Posterior vena cava (tissue), 2 donors: ENCODE measurements at regions of chr12 and their contacts with region 1.

Region 1: DNA sequence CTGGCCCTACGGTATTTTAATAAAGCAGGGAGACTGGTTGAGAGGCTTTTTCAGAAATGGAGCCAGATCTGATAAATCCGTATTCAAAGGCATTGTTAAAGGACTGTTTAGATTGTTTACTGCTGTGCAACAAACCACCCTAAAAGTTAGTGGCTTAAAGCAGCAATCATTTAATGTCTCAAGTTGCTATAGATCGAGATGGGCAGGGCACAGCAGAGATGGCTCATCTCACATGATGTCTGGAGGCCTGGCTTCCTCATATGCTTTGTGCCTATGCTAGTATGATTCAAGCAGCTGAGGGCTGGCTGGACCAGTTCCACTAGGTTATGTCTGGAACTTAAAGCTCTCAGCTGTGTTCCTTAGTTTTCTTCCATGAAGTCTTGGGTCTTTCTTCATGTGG is 4.6 kb upstream of the CCT2 start:
- DNase-seq: no peak

Region 2: GRCh38 chr12:69534389-69534822 is 46.2 kb before region 1 on chr12:
- intact Hi-C with region 1: loop called in 1 of 2 experiments (anchors 2 kb)
- DNase-seq: no peak

Region 3: GRCh38 chr12:71397433-71397954 is 1816.9 kb after region 1 on chr12:
- intact Hi-C with region 1: no loop called
- DNase-seq: no peak